HEK293 (cell line): ENCODE measurements at regions of chrX and their contacts with region 1.

Region 1: DNA sequence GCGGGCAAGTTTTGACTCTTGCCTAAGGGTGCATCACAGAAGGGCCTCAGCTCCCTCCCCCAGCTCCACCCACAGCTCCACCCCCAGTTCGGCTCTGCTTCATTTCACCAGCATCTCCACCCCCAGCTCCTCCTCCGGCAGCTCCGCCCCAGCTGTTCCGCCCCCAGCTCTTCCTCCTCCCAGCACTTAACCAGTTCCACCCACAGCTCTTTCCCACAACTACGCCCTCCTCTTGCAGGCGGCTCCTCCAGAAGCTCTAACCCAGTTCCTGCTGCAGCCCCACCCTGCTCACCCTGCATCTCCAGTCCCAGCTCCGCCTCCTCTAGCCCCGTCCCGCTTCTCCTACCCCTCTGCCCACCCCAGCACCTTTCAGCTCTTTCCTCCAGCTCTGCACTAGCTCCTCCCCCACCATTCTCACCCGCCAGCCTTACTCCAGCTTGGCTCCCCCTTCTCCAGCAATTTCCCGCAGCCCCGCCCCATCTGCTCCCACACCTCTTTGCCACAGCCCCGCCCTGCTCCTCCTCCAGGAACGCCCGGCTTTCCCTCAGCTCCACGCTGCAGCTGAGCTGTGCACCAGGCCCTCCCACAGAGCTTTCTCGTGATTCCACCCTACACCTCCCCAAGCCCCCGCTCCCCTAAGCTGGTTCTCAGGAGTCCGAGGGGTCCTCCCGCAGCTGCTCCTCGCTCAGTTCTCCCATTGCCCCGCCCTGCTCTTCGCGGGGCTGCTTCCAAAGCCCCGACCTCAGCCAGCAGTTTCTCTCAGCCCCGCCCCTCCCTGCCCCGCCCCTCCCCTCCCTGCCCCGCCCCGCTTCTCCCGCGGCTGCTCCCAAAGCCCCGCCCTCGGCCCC is 1.3 kb upstream of the EOLA1 start:
- H3K4me3 ChIP-seq: peak overlapping the region; percentile 44
- H3K27ac ChIP-seq: peak overlapping the region; percentile 43; the same call in 1 of the 2 replicates
- H3K4me1 ChIP-seq: no peaks in the 10 kb centered on the region
- CTCF ChIP-seq: no peak

Region 2: DNA sequence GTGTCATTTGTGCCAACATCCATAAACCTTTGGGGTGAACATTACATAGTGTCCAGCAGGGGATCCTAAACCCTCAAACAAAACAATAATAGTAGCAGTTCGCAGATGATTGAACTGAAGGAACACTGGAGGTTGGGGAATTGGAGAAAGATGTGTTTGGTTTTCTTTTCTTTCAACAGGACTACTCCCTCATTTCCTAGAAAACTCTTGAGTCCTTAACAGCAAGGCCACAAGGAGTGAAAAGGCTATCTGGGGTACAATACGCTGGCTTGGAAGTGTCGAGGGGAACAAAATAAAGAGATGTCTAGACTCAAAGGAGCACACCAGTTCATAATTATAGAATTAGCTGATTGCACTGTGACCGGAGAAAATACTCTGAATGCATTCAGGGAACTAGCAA is 106.5 kb before region 1 on chrX:
- CTCF ChIA-PET with region 1: no interaction called
- POLR2A ChIA-PET with region 1: no interaction called
- H3K4me3 ChIP-seq: no peak overlapping the region
- H3K27ac ChIP-seq: no peak overlapping the region
- H3K4me1 ChIP-seq: no peaks in the 10 kb centered on the region
- CTCF ChIP-seq: no peak

Region 3: GRCh38 chrX:149487292-149487691 is 52.2 kb before region 1 on chrX:
- CTCF ChIA-PET with region 1: no interaction called
- POLR2A ChIA-PET with region 1: no interaction called
- H3K4me3 ChIP-seq: no peak overlapping the region
- H3K27ac ChIP-seq: no peak overlapping the region
- H3K4me1 ChIP-seq: no peaks in the 10 kb centered on the region
- CTCF ChIP-seq: no peak

Region 4: DNA sequence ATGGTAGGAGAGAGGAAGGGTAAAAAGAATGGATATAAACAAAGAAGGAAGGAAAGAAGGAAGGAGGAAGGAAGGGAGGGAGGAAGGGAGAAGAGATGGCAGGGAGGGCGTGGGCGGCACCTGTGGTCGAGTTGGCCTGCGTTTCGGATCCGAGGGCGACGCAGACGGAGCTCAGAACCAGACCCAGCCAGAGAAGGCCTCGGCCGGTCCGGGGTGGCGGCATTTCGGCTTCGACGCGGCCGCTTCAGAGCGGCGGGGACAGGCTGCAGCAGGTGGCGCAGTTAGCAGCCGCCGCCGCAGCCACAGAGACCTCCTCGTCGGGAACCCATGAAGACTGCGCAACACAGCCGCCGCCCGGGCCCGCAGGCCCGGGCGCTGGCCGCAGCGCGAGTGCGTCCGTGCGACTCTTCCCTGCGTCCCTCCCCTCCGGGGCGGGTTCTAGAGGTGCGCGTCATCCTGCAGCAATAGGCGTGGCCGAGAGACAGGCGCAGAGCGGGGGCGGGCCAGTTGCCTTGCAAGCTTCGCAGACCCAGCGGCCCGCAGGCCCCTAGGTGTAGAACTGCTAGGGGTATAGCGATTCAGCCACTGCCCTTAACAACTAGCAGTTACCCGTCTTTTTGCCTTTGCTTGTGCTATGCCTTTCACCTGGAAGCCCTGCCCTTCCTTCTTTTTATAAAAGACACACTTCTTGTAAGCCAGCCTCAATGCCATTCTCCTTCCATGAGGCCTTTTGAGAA is 34.4 kb before region 1 on chrX and contains the start of gene IDS:
- CTCF ChIA-PET with region 1: no interaction called
- POLR2A ChIA-PET with region 1: interaction called, 19 read pairs
- H3K4me3 ChIP-seq: peak within 1 kb of the TSS; percentile 58
- H3K27ac ChIP-seq: peak within 1 kb of the TSS; percentile 48; the same call in 1 of the 2 replicates
- H3K4me1 ChIP-seq: peaks cover 2% of the 10 kb centered on the region; the same call in 1 of the 2 replicates
- CTCF ChIP-seq: peak; percentile 72

Region 5: DNA sequence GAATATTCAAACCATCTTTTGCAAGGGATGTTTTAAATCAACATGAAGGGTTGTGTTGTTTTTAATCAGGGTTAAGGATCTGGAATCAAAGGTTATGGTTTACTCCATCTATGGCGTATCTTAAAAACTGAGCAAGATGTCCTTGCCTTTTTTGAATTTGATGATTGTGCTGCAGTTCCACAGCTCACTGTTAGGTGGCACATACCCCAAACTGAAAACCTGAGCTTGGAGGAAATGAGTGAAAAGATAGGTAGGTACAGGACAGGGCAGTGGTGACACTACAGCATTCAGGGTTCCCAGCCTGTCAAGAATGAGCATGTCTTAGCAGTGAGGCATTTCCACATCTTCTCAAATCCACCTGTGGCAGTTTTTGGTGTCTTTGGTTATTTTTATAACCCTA is 11.8 kb before region 1 on chrX:
- CTCF ChIA-PET with region 1: interaction called, 12 read pairs
- POLR2A ChIA-PET with region 1: interaction called, 3 read pairs
- H3K4me3 ChIP-seq: no peak overlapping the region
- H3K27ac ChIP-seq: no peak overlapping the region
- H3K4me1 ChIP-seq: no peaks in the 10 kb centered on the region
- CTCF ChIP-seq: no peak